ENCODE measurements at regions of chr7 and their contacts with region 1.

Region 1: DNA sequence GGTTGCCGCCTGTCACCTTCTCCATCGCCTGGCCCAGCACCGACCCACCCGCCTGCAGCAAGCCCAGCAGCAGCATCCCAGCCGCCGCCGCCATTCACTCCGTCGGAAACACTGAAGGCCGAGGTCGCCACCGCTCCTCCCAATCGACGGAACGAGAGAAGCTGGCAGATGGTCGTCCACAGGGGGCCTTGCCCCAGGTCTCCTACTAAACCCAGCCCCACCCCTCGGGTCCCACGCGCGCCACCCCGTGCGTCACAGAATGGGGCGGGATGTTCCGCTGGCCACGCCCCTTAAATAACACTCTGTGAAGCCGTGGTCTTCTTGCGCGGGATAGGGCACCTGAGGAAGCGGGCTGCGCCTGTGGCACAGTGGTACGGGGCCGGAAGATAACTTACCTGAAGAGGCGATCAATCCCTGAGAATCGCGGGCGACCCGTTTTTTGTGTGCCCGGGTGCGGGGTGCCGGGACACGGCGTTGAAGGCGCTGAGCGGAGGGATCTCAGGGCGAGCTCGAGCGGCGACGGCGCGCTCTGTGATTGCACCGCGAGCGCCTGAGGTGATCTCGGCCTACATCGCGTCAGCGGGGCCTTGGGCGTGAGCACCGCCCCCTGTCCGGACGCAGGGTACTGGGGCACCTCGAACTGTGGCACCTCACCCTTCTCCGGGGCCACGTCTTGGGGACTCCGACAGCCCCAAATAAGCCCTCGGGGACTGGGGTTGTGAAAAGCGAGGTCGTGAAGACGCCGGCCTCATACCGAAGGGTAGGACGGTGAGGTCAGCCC is at the start of gene CYP51A1:
- DNase-seq: peak; percentile 92 to 95
- H3K4me3 ChIP-seq: peak within 1 kb of the TSS; percentile 21 to 96 (median 57)
- H3K27ac ChIP-seq: peak within 1 kb of the TSS; percentile 97 to 99 (median 97)
- H3K4me1 ChIP-seq: peaks cover 5 to 7% of the 10 kb centered on the region in 2 donors
- H3K27me3 ChIP-seq: no peaks in the 10 kb centered on the region
- CTCF ChIP-seq: peak in 1 of 6 experiments; percentile 16
- POLR2A ChIP-seq: peak; percentile 55 to 84
- total RNA-seq, gene CYP51A1: 46.9 to 89.1 (median 66.5) TPM

Region 2: GRCh38 chr7:91866599-91867148 is 267.8 kb before region 1 on chr7:
- intact Hi-C with region 1: no loop called
- DNase-seq: no peak
- H3K4me3 ChIP-seq: no peak overlapping the region
- H3K27ac ChIP-seq: no peak overlapping the region
- H3K4me1 ChIP-seq: no peaks in the 10 kb centered on the region
- H3K27me3 ChIP-seq: no peaks in the 10 kb centered on the region
- CTCF ChIP-seq: no peak
- POLR2A ChIP-seq: no peak

Region 3: DNA sequence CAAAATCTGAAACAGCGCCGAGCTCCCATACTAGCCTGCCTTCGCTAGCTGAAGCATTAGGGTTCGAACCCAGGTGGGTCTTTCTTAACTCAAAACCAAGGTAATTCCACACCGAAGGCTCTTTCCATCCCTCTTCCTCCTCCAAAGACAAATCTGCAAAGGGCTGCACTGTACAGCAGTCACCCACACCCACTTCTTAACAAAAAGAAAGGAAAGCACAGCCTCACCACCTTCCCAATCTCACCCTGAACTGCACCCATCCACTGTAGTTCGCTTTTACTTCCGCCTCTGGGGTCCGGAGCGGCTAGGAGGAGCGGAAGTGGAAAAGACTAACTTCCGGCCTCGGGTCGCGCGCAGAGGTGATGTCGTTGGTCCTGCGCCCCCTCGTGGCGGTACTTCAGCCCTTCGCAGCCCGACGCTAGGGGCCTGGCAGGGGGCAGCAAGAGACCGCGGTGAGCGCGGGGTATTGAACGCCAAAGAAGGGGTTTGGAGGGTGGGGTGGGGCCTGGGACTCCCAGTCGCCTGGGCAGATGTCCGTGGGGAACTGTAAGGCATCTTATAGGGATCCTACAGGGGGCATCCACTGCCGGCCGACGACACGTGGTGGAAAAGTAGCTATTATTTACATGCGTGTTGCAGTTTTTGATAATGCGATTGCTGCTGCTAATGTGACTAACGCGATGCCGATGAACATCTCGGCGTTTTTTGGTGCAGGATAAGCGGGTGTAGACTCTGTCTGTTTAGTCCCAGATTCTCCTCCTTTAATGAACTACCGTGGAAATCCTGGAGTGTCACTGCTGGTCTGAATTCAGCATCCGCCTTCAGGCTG is 253.8 kb before region 1 on chr7 and contains the start of gene MTERF1:
- intact Hi-C with region 1: loop called (anchors 5 kb)
- DNase-seq: peak; percentile 90 to 94
- H3K4me3 ChIP-seq: peak within 1 kb of the TSS; percentile 7 to 66 (median 50)
- H3K27ac ChIP-seq: peak within 1 kb of the TSS in 1 of 3 donors; percentile 62
- H3K4me1 ChIP-seq: peaks cover 8% of the 10 kb centered on the region in 2 donors
- H3K27me3 ChIP-seq: no peaks in the 10 kb centered on the region
- CTCF ChIP-seq: peak; percentile 83 to 96 (median 88)
- POLR2A ChIP-seq: peak in 1 of 2 donors; percentile 18
- total RNA-seq, gene MTERF1: 13.0 to 27.7 (median 21.5) TPM